BJ (cell line): ENCODE measurements at regions of chr18 and their contacts with region 1.

Region 1: DNA sequence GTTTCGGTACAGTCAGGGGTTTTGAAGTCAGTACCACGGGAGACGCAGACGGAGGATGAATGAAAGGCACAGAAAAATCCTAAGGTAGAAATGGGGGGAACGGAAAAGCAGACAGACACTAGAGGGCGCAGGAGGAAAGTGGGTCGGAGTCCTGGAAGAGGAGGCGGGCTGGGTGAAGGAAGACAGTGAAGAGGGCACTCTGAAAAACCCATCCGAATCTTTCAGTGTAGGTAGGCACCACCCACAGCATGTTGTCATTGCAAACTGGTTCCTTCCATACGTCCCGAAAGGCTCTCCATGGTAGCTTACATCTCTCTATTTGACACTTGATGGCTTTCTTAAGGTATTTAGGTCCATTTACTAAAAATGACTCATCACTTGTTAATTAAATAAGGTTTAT is 18.5 kb upstream of the ZNF236 start:
- DNase-seq: no peak
- H3K4me3 ChIP-seq: no peak overlapping the region
- H3K27me3 ChIP-seq: no peaks in the 10 kb centered on the region; the same call in 1 of the 2 replicates
- CTCF ChIP-seq: peak; percentile 91

Region 2: DNA sequence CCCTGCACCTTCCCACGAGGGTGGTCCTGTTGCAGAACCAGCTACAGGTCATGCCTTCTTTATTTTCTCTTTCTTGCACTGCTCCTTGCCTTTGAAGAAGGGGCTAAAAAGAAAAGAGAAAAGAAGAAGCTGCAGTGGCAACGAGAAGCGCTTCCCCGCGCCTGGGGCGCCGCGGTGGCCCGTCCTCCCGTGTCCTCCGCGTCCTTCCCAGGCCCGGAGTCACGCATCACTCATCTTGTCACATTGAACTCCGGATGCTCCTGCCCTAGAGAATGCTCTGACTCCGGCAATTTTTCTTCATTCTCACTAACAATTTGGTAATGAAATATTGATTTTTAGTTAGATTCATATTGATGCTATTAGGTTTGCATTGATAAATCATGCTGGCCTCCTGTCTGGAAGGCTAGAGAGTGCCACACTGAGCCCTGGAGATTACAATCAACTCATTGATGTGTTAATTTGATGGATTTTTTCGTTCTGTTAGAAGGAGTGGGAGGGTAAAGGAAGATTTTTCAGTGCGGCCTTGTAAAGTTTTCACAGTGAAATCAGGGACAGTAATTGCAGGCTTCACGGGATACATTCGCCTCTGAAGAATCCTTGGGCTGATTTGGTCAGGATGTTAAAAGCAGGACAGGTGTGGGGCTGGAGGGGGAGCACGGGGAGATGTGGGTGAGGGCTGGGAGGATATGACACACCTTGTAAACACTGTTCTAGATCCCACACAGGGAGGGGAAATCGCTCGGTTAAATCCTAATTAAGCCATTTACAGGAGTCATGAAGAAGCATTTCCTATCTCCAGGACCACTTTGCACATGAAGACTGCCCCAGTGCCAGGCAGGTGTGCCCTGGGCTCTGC is 658.1 kb before region 1 on chr18:
- CTCF ChIA-PET with region 1: no interaction called
- POLR2A ChIA-PET with region 1: no interaction called
- DNase-seq: no peak
- H3K4me3 ChIP-seq: no peak overlapping the region
- H3K27me3 ChIP-seq: no peaks in the 10 kb centered on the region
- CTCF ChIP-seq: no peak

Region 3: GRCh38 chr18:76791106-76791505 is 12.7 kb before region 1 on chr18:
- CTCF ChIA-PET with region 1: interaction called, 61 read pairs
- POLR2A ChIA-PET with region 1: no interaction called
- DNase-seq: no peak
- H3K4me3 ChIP-seq: no peak overlapping the region
- H3K27me3 ChIP-seq: no peaks in the 10 kb centered on the region
- CTCF ChIP-seq: no peak

Region 4: DNA sequence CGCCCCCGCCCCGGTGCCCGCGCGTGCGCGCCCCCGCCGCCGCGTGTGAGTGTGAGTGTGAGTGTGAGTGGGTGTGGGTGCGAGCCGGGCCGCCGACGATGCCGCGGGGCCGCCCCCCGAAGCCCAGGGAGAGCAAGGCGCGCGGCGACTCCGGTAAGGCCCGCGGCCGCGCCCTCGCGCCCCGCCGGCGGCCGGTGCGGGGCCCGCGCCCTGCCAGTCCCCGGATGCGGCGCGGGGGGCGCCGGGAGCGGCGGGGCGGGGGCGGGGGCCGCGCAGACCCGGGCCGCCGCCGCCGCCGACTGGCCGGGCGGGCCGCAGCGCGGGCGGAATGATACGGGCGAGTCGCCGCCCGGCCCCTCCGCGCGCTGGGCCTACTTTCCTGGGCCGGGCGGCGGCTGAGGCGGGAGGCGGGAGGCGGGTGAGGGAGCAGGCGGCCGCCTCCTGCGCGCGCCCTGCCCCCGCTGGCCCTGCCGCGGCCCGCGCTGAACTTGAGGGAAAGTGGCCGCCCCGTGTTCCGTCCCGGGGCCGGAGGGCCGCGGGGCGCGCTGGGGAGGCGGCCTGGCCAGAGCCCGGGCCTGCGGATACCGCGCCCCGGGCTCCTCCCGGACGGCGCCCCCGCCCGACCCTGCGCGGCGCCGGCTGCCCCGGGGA is 18.8 kb after region 1 on chr18 and contains the start of gene ZNF236:
- CTCF ChIA-PET with region 1: interaction called, 41 read pairs
- POLR2A ChIA-PET with region 1: no interaction called
- DNase-seq: no peak
- H3K4me3 ChIP-seq: peak within 1 kb of the TSS; percentile 81
- H3K27me3 ChIP-seq: no peaks in the 10 kb centered on the region
- CTCF ChIP-seq: no peak
- polyA plus RNA-seq, gene ZNF236: 4.5 and 5.1 TPM in 2 replicates

Region 5: DNA sequence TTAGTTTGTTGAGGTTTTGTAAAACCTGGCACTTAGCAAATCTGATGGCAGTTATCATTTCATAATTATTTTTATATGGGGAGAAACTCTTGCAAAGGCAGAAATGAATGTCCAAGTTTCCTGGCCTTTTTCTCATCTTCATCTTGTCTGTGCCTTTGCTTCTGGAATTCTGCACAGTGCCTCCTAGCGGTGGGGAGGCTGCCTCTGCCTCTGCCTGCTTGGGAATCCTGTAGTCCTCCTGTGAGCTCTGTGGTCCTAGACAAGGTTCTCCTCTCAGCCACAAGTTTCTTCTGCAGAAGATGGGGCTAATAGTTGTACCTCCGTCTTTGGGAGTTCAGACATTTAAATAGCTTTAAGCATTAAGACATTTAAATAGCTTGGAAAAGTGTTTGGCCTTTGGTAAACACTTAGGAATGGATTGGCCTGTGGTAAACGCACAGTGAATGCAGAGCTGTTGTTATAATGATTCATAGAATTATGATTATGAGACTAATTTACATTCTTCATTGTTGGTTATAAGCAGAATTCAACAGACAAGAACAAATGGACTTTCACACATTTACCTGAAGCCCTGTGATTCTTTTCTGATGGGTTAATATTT is 119.8 kb after region 1 on chr18:
- CTCF ChIA-PET with region 1: interaction called, 14 read pairs
- POLR2A ChIA-PET with region 1: no interaction called
- DNase-seq: no peak
- H3K4me3 ChIP-seq: no peak overlapping the region
- H3K27me3 ChIP-seq: no peaks in the 10 kb centered on the region
- CTCF ChIP-seq: peak; percentile 48

Region 6: DNA sequence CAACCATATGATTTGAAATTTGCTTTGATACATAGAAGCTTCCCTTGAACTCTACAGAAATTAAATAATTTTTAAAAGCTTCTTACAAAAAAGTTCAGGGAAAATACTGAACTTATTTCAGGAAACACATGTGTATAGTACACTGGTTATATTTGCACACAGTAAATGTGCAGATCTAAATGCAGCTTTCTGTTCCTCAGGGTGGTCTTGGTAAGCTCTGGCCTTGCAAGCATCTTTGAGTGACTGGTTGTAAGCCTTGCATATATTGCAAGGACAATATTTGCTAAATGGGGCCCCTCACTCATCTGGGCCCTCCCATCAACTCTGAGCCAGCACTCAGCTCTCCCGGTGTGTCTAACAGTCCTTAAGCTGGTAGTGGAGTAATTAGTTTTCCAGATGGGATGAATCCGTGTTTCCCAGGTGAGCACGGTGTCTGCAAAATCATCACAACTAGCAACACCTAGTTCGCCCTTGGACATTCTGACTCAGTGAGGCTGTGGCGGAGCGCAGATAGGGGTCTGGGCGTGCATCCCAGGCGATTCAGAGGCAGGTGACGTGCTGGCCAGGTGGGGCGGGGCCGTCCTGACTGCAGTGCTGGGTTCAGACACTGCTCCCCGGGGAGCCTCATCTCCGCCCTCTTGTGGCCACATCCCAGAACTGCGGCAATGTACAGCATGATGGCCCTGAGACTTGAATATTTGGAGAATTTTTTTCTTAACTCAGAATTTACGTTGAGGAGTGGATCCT is 179.2 kb after region 1 on chr18:
- CTCF ChIA-PET with region 1: interaction called, 166 read pairs
- POLR2A ChIA-PET with region 1: no interaction called
- DNase-seq: peak; percentile 3
- H3K4me3 ChIP-seq: no peak overlapping the region
- H3K27me3 ChIP-seq: peaks cover 2% of the 10 kb centered on the region; the same call in 1 of the 2 replicates
- CTCF ChIP-seq: peak; percentile 96